PC-3 (cell line): ENCODE measurements at regions of chr11 and their contacts with region 1.

Region 1: DNA sequence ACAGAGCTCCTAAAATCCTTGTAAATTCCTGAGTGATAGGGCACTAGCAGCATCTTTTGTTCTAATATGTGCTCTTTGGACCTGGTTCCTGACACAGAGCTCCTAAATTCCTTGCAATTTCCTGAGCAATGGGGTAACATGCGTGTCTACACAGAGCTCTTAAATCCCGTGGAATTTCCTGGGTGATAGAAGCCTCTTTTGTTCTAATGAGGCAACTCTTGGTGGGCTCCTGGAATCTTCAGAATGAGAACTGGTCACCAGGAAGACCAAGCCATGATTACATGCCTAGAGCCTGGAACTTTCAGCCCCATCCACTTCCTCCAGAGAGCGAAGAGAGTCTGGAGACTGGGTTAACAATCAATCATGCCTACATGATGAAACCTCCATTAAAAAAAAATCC is 19.0 kb downstream of the RSF1 start:
- DNase-seq: no peak
- ATAC-seq: no peak
- H3K4me3 ChIP-seq: no peak overlapping the region
- H3K27ac ChIP-seq: no peak overlapping the region
- H3K4me1 ChIP-seq: no peaks in the 10 kb centered on the region
- H3K27me3 ChIP-seq: no peaks in the 10 kb centered on the region
- CTCF ChIP-seq: no peak

Region 2: DNA sequence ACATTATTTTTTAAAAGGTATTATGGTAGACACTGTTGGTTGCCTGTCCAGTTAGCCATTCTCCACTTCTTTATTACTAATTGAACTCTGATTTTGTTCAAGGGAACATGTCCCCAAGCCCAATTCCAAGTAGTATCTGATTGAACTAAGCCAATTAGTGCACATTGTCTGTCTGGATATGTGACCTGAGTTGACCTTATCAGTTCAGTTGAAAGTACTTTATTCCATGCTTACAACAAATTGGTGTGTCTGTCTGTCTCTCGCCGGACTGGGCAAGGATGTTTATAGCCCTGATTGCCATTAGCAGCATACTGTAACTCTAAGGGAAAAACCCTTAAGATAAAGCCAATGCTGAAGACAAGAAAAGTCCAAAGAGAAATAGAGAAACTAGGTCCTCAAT is 107.4 kb after region 1 on chr11:
- CTCF ChIA-PET with region 1: interaction called, 10 read pairs
- POLR2A ChIA-PET with region 1: no interaction called
- intact Hi-C with region 1: no loop called
- DNase-seq: no peak
- ATAC-seq: no peak
- H3K4me3 ChIP-seq: no peak overlapping the region
- H3K27ac ChIP-seq: no peak overlapping the region
- H3K4me1 ChIP-seq: peaks cover 4% of the 10 kb centered on the region
- H3K27me3 ChIP-seq: no peaks in the 10 kb centered on the region
- CTCF ChIP-seq: no peak